Activated naive CD4-positive, alpha-beta T cell treated with anti-CD3 and anti-CD28 coated beads for 36 hours (primary cell): ENCODE measurements at regions of chr1 and their contacts with region 1.

Region 1: DNA sequence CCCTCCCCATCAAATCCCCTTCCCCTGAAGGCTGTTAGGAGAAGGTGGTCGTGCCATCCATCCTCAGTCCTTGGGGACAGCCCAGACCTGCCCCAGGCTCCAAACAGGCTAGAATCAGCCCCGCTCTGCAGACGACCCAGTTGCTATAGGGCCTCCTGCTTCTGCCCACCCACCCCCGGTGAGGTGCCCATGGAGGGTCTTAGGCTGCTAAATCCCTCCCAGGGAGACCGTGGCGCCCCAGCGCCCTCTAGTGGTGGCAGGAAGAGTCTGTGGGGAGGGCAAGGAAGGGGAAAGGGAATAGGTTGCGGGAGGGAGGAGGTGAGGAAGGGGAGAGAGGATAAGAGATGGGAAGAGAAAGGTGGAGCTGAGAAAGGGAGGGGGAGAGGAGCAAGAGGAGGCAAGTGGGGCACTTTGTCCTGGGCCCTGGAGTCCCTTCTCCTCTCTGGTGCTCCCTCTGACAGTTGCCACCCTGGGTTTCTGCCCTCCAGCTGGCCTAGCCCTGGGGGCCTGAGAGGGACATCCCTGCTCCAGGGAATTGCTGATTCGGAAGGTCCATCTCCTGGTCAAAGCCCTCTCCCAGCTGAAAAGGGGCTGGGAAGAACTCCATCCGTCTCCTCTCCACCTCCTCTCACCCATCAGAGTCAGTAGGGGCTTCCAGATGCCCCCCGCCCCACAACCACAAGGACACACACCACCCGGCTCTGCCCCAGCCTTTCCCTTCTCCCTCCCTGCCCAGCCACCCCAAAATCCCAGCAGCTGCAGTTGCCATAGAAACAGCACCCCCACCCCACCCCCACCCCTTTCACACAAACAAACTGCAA is 55.4 kb downstream of the CAMK2N1 start:
- DNase-seq: peak; percentile 61
- H3K4me3 Mint-ChIP-seq: no peak overlapping the region
- H3K27ac Mint-ChIP-seq: no peak overlapping the region
- H3K4me1 Mint-ChIP-seq: peaks cover 20% of the 10 kb centered on the region
- H3K27me3 Mint-ChIP-seq: peaks cover 44% of the 10 kb centered on the region

Region 2: GRCh38 chr1:20212685-20213331 is 217.8 kb before region 1 on chr1:
- CTCF ChIA-PET with region 1: interaction called, 26 read pairs
- intact Hi-C with region 1: loop called (anchors 1 kb)
- DNase-seq: peak; percentile 66
- H3K4me3 Mint-ChIP-seq: no peak overlapping the region
- H3K27ac Mint-ChIP-seq: no peak overlapping the region
- H3K4me1 Mint-ChIP-seq: peaks cover 7% of the 10 kb centered on the region
- H3K27me3 Mint-ChIP-seq: peaks cover 21% of the 10 kb centered on the region

Region 3: GRCh38 chr1:20233394-20233793 is 197.2 kb before region 1 on chr1:
- CTCF ChIA-PET with region 1: interaction called, 4 read pairs
- intact Hi-C with region 1: loop called (anchors 1 kb)
- DNase-seq: no peak
- H3K4me3 Mint-ChIP-seq: no peak overlapping the region
- H3K27ac Mint-ChIP-seq: no peak overlapping the region
- H3K4me1 Mint-ChIP-seq: no peaks in the 10 kb centered on the region
- H3K27me3 Mint-ChIP-seq: peaks cover 33% of the 10 kb centered on the region

Region 4: GRCh38 chr1:20376880-20377494 is 53.6 kb before region 1 on chr1:
- CTCF ChIA-PET with region 1: interaction called, 5 read pairs
- intact Hi-C with region 1: loop called (anchors 1 kb)
- DNase-seq: peak; percentile 78
- H3K4me3 Mint-ChIP-seq: no peak overlapping the region
- H3K27ac Mint-ChIP-seq: no peak overlapping the region
- H3K4me1 Mint-ChIP-seq: peaks cover 4% of the 10 kb centered on the region
- H3K27me3 Mint-ChIP-seq: peaks cover 28% of the 10 kb centered on the region

Region 5: DNA sequence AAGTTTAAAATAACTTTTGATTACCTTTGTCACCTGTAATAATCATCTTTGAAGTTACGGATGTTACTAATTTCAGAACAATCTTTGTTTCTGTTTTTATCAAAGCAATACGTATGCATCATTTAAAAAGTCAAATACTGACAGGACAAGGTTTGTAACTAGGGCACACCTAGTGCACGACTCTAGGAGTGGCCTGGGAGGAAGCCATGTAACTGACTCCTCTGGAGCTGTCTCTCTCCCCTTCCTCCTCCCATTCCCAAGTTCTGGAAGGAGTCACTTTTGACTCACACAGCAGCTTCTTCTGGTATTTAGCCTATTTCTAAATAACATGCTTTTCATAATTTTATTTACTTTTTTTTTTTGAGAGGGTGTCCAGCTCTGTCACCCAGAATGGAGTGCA is 1250.4 kb after region 1 on chr1:
- CTCF ChIA-PET with region 1: no interaction called
- intact Hi-C with region 1: no loop called
- DNase-seq: no peak
- H3K4me3 Mint-ChIP-seq: no peak overlapping the region
- H3K27ac Mint-ChIP-seq: peak overlapping the region; percentile 31
- H3K4me1 Mint-ChIP-seq: peaks cover 4% of the 10 kb centered on the region
- H3K27me3 Mint-ChIP-seq: no peaks in the 10 kb centered on the region